ENCODE measurements at regions of chr6 and their contacts with region 1.

Region 1: GRCh38 chr6:37381579-37381978 is 27.8 kb downstream of the RNF8 start:
- DNase-seq: peak; percentile 52 to 83 (median 78)
- H3K4me3 ChIP-seq: no peak overlapping the region
- H3K27ac ChIP-seq: no peak overlapping the region
- H3K4me1 ChIP-seq: no peaks in the 10 kb centered on the region
- H3K27me3 ChIP-seq: no peaks in the 10 kb centered on the region

Region 2: DNA sequence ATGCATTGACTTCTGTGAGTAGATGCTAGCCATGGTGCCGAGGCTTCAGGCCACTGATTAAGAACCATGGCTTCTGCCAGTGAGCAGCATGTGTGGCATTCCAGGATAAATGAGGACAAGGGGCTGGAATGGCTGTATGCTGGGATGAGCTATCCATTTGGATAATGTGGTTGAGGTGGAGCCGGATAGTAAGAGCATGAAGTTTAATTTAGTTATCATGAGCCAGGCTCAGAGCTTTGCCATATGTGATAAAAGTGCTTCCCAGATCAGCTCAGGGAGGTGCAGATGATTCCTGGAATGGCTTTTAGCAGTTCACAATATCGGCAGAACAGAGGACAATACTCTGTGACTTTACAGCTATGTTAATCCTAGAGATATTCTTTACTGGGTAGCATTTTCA is 62.4 kb before region 1 on chr6:
- CTCF ChIA-PET with region 1: no interaction called
- POLR2A ChIA-PET with region 1: no interaction called
- DNase-seq: no peak
- H3K4me3 ChIP-seq: no peak overlapping the region
- H3K27ac ChIP-seq: no peak overlapping the region
- H3K4me1 ChIP-seq: peaks cover 9 to 53% (median 43%) of the 10 kb centered on the region in 4 experiments
- H3K27me3 ChIP-seq: no peaks in the 10 kb centered on the region

Region 3: DNA sequence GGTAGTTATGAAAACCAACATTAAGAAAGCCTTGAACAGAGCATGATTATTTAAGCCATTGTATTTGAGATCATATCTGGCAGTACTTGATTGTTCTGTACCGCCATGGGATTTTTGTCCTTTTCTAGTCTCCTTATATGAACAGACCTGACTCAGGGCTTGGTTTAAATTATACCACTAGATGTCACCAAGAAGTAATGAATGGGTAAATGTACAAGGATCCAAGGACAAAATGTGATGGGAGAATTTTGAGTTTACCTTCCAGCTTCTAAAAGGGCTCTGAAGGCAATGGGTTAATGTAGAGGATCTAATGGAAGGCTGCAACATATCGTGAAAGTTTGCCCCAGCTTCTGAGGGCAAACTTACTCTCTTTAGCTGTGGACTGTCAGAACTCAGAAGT is 15.8 kb before region 1 on chr6:
- CTCF ChIA-PET with region 1: interaction called, 11 read pairs
- POLR2A ChIA-PET with region 1: no interaction called
- DNase-seq: peak in 2 of 3 donors; percentile 37 to 44
- H3K4me3 ChIP-seq: no peak overlapping the region
- H3K27ac ChIP-seq: peak overlapping the region in 1 of 2 experiments; percentile 23
- H3K4me1 ChIP-seq: peaks cover 0 to 38% (median 19%) of the 10 kb centered on the region in 4 experiments
- H3K27me3 ChIP-seq: no peaks in the 10 kb centered on the region

Region 4: DNA sequence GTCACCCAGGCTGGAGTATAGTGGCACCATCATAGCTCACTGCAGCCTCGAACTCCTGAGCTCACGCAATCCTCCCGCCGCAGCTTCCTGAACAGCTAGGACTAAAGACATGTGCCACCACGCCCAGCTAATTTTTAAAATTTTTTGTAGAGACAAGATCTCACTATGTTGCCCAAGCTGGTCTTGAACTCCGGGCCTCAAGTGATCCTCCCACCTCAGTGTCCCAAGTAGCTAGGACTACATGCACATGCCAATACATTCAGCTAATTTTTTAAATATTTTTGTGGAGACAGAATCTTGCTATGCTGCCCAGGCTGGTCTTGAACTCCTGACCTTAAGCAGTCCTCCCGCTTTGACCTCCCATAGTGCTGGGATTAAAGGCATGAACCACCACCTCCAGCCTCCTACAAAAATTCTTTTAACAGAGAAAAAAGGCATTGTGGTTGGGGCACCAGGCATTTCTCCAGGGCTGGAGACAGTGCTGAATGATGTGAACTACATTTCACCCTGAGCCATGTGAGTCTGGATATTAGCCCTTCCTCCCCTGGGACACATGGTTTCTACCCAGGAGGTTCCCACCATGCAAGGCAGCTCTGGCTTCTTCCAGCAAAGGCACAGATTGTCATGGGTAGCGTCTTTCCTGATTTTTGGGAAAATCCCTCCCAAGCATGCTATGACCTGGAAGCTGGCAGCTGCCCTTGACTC is 15.0 kb after region 1 on chr6:
- CTCF ChIA-PET with region 1: interaction called, 16 read pairs
- POLR2A ChIA-PET with region 1: no interaction called
- DNase-seq: no peak
- H3K4me3 ChIP-seq: no peak overlapping the region
- H3K27ac ChIP-seq: no peak overlapping the region
- H3K4me1 ChIP-seq: no peaks in the 10 kb centered on the region
- H3K27me3 ChIP-seq: no peaks in the 10 kb centered on the region

Region 5: GRCh38 chr6:37432916-37433656 is 51.5 kb after region 1 on chr6 and contains the start of gene CMTR1:
- CTCF ChIA-PET with region 1: no interaction called
- POLR2A ChIA-PET with region 1: no interaction called
- DNase-seq: peak; percentile 96 to 97 (median 97)
- H3K4me3 ChIP-seq: peak within 1 kb of the TSS; percentile 75 to 100 (median 88)
- H3K27ac ChIP-seq: peak within 1 kb of the TSS; percentile 85 to 89
- H3K4me1 ChIP-seq: peaks cover 10 to 19% (median 15%) of the 10 kb centered on the region in 4 experiments
- H3K27me3 ChIP-seq: no peaks in the 10 kb centered on the region

Measured in common myeloid progenitor, CD34-positive (primary cell).